Activated T-helper 1 cell treated with anti-CD3 and anti-CD28 coated beads, Interleukin-12 subunit alpha, Interleukin-12 subunit beta, Interleukin-2, Interleukin-4 antibody, amounts not matched to agents 30 ng/mL and 10 ng/mL and 1 ng/mL, durations not matched to agents 14 hours and 24 hours and 36 hours (primary cell): ENCODE measurements at regions of chr5 and their contacts with region 1.

Region 1: GRCh38 chr5:79878721-79879336 is 112.2 kb downstream of the MTX3 start:
- DNase-seq: peak; percentile 6
- H3K4me3 Mint-ChIP-seq: no peak overlapping the region
- H3K27ac Mint-ChIP-seq: no peak overlapping the region
- H3K4me1 Mint-ChIP-seq: no peaks in the 10 kb centered on the region
- H3K27me3 Mint-ChIP-seq: no peaks in the 10 kb centered on the region

Region 2: GRCh38 chr5:79829260-79829659 is 49.6 kb before region 1 on chr5:
- intact Hi-C with region 1: no loop called
- DNase-seq: no peak
- H3K4me3 Mint-ChIP-seq: no peak overlapping the region
- H3K27ac Mint-ChIP-seq: no peak overlapping the region
- H3K4me1 Mint-ChIP-seq: no peaks in the 10 kb centered on the region
- H3K27me3 Mint-ChIP-seq: peaks cover 13% of the 10 kb centered on the region

Region 3: DNA sequence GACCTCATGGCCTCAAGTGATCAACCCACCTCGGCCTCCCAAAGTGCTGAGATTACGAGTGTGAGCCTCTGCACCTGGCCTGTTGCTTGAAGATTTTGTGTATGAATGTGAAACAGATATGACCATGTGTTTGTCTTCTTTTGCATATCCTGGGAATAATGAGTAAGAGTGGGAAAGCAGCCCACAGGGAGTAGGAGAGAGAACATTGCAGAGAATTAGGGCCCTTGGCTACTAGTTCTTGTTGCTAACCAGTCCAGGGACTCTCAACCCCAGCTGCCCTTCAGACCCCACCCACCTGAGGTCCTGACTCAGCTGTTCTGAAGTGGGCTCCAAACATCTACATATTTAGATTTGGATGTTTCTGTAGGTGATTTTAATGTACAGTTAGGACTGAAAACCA is 13.2 kb before region 1 on chr5:
- intact Hi-C with region 1: no loop called
- DNase-seq: no peak
- H3K4me3 Mint-ChIP-seq: no peak overlapping the region
- H3K27ac Mint-ChIP-seq: no peak overlapping the region
- H3K4me1 Mint-ChIP-seq: no peaks in the 10 kb centered on the region
- H3K27me3 Mint-ChIP-seq: peaks cover 19% of the 10 kb centered on the region

Region 4: DNA sequence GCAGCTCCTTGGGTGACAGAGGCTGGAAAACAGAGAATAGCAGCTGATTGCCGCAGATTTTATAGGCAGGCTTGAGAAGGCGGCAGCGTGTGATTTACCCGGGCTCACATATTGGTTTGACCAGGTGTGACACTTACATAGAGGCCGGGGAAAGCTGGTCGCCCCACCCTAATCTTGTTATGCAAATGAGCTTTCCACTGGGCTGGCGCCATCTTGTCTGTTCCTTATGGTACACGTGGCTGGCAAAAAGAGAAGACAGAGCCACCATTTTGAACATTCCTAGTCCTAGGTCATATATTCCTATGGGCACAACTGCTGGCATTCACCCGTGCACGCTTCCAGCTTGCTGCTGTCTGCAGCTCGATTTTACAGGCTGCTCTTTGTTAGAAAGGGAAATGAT is 429.7 kb after region 1 on chr5:
- intact Hi-C with region 1: loop called (anchors 10 kb)
- DNase-seq: no peak
- H3K4me3 Mint-ChIP-seq: no peak overlapping the region
- H3K27ac Mint-ChIP-seq: no peak overlapping the region
- H3K4me1 Mint-ChIP-seq: no peaks in the 10 kb centered on the region
- H3K27me3 Mint-ChIP-seq: peaks cover 8% of the 10 kb centered on the region